ENCODE measurements at regions of chr3 and their contacts with region 1.

Region 1: GRCh38 chr3:88203642-88204055 is 53.9 kb downstream of the C3orf38 start:
- DNase-seq: peak; percentile 90
- ATAC-seq: peak; percentile 100
- H3K4me3 ChIP-seq: no peak overlapping the region
- H3K27ac ChIP-seq: no peak overlapping the region
- H3K4me1 ChIP-seq: no peaks in the 10 kb centered on the region
- H3K27me3 ChIP-seq: peaks cover 33% of the 10 kb centered on the region
- CTCF ChIP-seq: peak; percentile 96

Region 2: GRCh38 chr3:89098964-89099585 is 895.4 kb after region 1 on chr3:
- CTCF ChIA-PET with region 1: no interaction called
- POLR2A ChIA-PET with region 1: no interaction called
- intact Hi-C with region 1: loop called (anchors 1 kb)
- DNase-seq: peak; percentile 79
- ATAC-seq: peak; percentile 73
- H3K4me3 ChIP-seq: no peak overlapping the region
- H3K27ac ChIP-seq: no peak overlapping the region
- H3K4me1 ChIP-seq: 0 out of 2 replicates have a peak, but pooled peaks cover 3% of the 10 kb centered on the region
- H3K27me3 ChIP-seq: peaks cover 6% of the 10 kb centered on the region; the same call in 1 of the 2 replicates
- CTCF ChIP-seq: peak; percentile 96

Region 3: DNA sequence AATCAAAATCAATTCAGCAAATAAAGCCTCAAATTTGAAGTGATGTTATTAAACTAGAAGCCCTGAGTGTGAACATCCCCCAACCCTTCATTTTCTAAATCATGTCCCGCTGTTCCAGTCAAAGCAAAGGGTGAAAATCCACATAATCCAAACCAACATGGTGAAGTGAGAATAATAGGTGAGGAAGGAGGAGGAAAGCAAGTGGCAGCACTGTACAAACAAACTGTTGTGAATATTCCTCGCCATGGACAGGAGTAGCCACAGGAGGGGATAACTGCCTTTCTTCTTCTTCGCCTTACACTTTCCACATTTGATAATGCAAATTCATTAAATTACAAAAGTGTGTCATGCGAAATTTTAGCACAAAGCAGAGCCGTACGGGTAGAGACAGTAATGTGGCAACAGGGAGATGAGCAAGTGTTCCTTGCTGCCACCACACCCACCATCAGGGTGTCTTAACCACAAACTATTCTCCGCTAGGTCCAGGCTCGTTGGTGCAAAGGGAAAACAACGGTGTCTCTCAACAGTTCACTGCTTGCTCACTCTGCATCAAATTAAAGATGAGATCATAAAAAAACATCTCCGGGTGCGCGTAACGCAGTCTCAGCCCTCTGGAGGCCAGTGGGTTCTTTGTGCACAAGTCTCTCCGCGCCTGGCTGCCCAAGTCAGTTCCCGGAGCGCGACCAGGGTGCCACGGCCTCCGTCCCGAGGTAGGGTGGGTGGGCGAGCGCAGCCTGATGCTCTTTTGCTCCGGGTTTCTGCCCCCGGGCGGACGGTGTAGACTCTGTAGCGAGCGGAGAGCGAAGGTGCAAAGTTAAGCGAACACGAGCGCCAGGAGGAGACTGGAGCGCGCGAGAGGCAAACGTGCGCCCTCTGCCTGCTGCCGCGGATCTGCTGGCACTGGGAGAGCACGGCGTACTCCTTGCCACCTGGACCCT is 910.5 kb after region 1 on chr3:
- CTCF ChIA-PET with region 1: no interaction called
- POLR2A ChIA-PET with region 1: no interaction called
- intact Hi-C with region 1: loop called (anchors 5 kb)
- DNase-seq: peak; percentile 69
- ATAC-seq: peak; percentile 98
- H3K4me3 ChIP-seq: peak overlapping the region; percentile 66
- H3K27ac ChIP-seq: no peak overlapping the region
- H3K4me1 ChIP-seq: no peaks in the 10 kb centered on the region
- H3K27me3 ChIP-seq: peaks cover 42% of the 10 kb centered on the region
- CTCF ChIP-seq: peak; percentile 81

Region 4: GRCh38 chr3:89851974-89852621 is 1648.4 kb after region 1 on chr3:
- CTCF ChIA-PET with region 1: no interaction called
- POLR2A ChIA-PET with region 1: no interaction called
- intact Hi-C with region 1: loop called (anchors 10 kb)
- DNase-seq: peak; percentile 76
- ATAC-seq: peak; percentile 73
- H3K4me3 ChIP-seq: no peak overlapping the region
- H3K27ac ChIP-seq: no peak overlapping the region
- H3K4me1 ChIP-seq: no peaks in the 10 kb centered on the region
- H3K27me3 ChIP-seq: 0 out of 2 replicates have a peak, but pooled peaks cover 11% of the 10 kb centered on the region
- CTCF ChIP-seq: peak; percentile 92

Region 5: DNA sequence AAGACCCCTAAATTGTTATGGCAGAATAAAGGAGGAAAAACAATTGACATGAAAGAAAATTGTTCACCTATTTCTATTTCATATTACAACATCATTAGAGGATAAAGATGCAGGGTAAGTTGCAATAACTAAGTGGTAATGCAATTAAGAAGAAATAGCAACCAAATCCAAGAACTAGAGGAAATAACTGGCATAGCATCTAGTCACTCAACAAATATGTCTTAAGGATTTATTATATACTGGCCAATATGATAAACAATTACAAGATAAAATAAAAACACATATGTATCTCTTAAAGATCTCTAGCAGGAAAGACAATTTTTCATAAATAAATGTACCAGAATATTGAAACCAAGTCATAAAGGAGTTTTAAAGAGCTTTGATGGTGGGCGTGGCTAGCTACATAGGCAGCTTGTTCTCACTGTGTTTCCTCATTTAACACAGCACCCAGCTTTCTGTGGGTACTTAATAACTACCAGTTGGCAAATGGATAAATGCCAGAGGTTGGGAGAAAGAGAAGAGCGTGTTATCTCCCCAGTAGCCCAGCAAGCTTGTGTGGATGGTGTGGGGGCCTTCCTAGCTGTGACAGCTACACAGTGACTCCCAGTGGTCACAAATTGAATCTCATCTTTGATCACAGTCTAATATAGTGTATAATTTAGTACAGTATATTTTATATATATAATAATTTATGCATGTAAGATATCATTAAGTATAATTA is 1887.7 kb after region 1 on chr3:
- CTCF ChIA-PET with region 1: no interaction called
- POLR2A ChIA-PET with region 1: no interaction called
- intact Hi-C with region 1: loop called (anchors 1 kb)
- DNase-seq: peak; percentile 59
- ATAC-seq: peak; percentile 92
- H3K4me3 ChIP-seq: no peak overlapping the region
- H3K27ac ChIP-seq: no peak overlapping the region
- H3K4me1 ChIP-seq: no peaks in the 10 kb centered on the region
- H3K27me3 ChIP-seq: no peaks in the 10 kb centered on the region; the same call in 1 of the 2 replicates
- CTCF ChIP-seq: peak; percentile 68

Region 6: DNA sequence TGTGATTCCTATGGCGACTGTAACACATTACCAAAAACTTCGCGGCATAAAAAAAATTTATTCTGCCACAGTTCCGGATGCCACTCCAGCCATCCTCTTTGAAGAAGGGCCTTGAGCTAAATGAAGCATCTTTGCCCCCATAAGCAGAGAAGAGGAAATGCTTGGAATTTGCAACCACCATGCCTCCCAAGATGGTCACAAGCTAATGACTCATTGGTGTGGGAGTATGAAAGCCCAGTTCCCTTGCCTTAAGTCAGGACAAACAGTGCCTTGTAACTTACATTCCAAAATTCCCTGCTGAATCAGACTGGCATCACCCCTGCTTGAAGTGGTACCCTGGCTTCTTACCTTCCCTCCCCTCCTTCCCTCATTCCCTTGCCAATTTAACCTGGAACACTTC is 1981.2 kb after region 1 on chr3:
- CTCF ChIA-PET with region 1: no interaction called
- POLR2A ChIA-PET with region 1: no interaction called
- intact Hi-C with region 1: loop called (anchors 10 kb)
- DNase-seq: peak; percentile 49
- ATAC-seq: peak; percentile 72
- H3K4me3 ChIP-seq: no peak overlapping the region
- H3K27ac ChIP-seq: no peak overlapping the region
- H3K4me1 ChIP-seq: no peaks in the 10 kb centered on the region
- H3K27me3 ChIP-seq: peaks cover 11% of the 10 kb centered on the region
- CTCF ChIP-seq: no peak

Measured in PC-3 (cell line).